Aorta (tissue), 5 donors: ENCODE measurements at regions of chr1 and their contacts with region 1.

Region 1: GRCh38 chr1:228734881-228735801 is at the start of gene RHOU:
- DNase-seq: peak; percentile 90 to 94
- ATAC-seq: peak; percentile 94
- H3K4me3 ChIP-seq: peak within 1 kb of the TSS; percentile 85 to 98
- H3K27ac ChIP-seq: peak within 1 kb of the TSS; percentile 79 to 95
- H3K4me1 ChIP-seq: peaks cover 0 to 5% of the 10 kb centered on the region in 2 donors
- H3K27me3 ChIP-seq: no peaks in the 10 kb centered on the region
- total RNA-seq, gene RHOU: 30.3 to 32.5 TPM

Region 2: DNA sequence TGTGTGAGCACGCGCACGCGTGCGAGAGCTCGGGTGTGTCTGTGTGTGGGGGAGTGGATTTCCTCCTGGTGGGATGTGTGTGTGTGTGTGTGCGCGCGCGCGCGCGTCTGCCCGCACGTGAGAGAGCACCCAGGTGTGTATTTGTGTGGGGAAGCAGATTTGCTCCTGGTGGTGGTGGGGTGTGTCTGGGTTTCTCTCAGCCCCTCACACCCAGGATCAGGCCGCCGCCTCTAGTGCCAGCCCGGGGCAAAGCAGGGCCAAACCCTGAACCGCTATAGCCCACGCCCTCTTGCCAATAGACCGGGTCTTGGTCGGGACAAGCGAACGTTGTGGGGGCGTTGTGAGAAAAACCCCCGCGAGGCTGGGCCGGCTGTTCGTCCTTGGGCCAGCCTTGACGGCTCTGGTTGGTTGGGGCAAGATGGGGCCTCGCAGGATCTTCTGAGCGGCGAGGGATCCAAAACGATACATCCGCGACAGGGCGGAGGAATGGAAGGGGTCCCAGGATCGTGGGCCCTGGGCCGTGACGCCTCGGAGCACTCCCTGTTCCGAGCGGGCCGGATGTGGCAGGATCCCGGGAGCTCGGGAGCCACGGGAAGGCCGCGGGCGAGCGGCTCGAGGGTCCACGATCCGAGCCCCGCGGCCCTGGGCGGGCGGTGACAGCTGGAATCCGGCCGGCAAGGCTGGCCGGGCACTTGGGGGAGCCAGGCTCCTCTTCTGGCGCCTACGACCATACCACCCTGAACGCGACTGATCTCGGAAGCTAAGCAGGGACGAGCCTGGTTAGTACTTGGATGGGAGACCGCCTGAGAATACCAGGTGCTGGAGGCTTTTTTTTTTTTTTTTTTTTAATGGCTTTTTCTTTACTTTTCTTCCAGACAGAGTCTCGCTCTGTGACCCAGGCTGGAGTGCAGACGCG is 179.8 kb before region 1 on chr1:
- intact Hi-C with region 1: no loop called
- DNase-seq: no peak
- ATAC-seq: peak; percentile 26
- H3K4me3 ChIP-seq: no peak overlapping the region
- H3K27ac ChIP-seq: no peak overlapping the region
- H3K4me1 ChIP-seq: no peaks in the 10 kb centered on the region
- H3K27me3 ChIP-seq: no peaks in the 10 kb centered on the region

Region 3: DNA sequence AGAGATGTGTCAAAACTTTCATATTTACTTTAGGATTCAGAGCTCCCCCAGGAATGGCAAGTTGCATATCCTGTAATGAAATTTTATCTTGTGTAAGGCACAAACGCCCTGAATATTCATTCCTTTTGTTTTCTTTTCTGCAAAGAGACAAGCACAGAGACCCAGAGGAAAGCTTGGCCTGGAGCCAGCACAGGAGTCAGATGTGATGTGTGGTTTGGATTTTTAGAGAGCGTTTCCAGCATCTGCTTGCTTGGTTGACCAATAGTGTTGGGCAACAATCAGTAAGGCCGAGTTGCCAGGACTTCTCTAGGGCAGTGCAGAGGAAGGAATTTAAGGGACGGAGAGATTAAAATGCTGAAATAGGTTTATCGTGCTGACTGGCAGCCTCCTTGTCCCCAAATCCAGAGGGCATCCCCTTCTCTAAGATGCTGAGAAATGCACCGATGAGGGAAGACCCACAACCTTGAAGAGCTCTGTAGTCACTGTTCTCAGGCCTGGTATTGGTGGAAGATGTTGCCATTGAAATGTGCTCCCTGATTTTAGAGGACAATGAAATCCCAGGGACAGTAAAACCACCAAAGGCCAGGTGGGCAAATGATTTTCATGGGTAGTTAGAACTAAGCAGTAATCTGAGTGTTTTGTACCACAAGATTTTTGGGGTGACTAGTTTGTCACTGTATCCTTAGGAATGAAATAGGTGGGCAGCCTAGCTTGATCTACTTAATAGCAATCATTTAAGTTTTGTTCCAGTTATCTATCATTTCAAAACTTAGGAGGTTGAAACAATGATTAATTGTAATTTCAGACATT is 37.7 kb before region 1 on chr1:
- intact Hi-C with region 1: loop called in 1 of 2 experiments (anchors 5 kb)
- DNase-seq: peak; percentile 80 to 86
- ATAC-seq: peak; percentile 65
- H3K4me3 ChIP-seq: no peak overlapping the region
- H3K27ac ChIP-seq: no peak overlapping the region
- H3K4me1 ChIP-seq: peaks cover 2% of the 10 kb centered on the region in 2 donors
- H3K27me3 ChIP-seq: no peaks in the 10 kb centered on the region

Region 4: GRCh38 chr1:228902781-228903433 is 167.8 kb after region 1 on chr1:
- intact Hi-C with region 1: loop called (anchors 2 to 5 kb)
- DNase-seq: peak; percentile 89 to 93
- ATAC-seq: peak; percentile 89
- H3K4me3 ChIP-seq: no peak overlapping the region
- H3K27ac ChIP-seq: peak overlapping the region in 1 of 2 donors; percentile 82
- H3K4me1 ChIP-seq: no peaks in the 10 kb centered on the region
- H3K27me3 ChIP-seq: no peaks in the 10 kb centered on the region

Region 5: GRCh38 chr1:229087339-229087738 is 352.2 kb after region 1 on chr1:
- intact Hi-C with region 1: loop called in 1 of 2 experiments (anchors 5 kb)
- DNase-seq: peak in 1 of 2 donors; percentile 52
- ATAC-seq: peak; percentile 69
- H3K4me3 ChIP-seq: no peak overlapping the region
- H3K27ac ChIP-seq: peak overlapping the region; percentile 33 to 55
- H3K4me1 ChIP-seq: peaks cover 3 to 5% of the 10 kb centered on the region in 2 donors
- H3K27me3 ChIP-seq: no peaks in the 10 kb centered on the region

Region 6: GRCh38 chr1:229227298-229227919 is 492.3 kb after region 1 on chr1:
- intact Hi-C with region 1: loop called (anchors 1 to 5 kb)
- DNase-seq: peak; percentile 84 to 94
- ATAC-seq: peak; percentile 72
- H3K4me3 ChIP-seq: no peak overlapping the region
- H3K27ac ChIP-seq: no peak overlapping the region
- H3K4me1 ChIP-seq: peaks cover 0 to 2% of the 10 kb centered on the region in 2 donors
- H3K27me3 ChIP-seq: no peaks in the 10 kb centered on the region